BJ (cell line): ENCODE measurements at regions of chr7 and their contacts with region 1.

Region 1: GRCh38 chr7:17769918-17770317 is 170.4 kb downstream of the SNX13 start:
- DNase-seq: no peak
- H3K4me3 ChIP-seq: no peak overlapping the region
- H3K27me3 ChIP-seq: peaks cover 1% of the 10 kb centered on the region; the same call in 1 of the 2 replicates
- CTCF ChIP-seq: peak; percentile 83

Region 2: DNA sequence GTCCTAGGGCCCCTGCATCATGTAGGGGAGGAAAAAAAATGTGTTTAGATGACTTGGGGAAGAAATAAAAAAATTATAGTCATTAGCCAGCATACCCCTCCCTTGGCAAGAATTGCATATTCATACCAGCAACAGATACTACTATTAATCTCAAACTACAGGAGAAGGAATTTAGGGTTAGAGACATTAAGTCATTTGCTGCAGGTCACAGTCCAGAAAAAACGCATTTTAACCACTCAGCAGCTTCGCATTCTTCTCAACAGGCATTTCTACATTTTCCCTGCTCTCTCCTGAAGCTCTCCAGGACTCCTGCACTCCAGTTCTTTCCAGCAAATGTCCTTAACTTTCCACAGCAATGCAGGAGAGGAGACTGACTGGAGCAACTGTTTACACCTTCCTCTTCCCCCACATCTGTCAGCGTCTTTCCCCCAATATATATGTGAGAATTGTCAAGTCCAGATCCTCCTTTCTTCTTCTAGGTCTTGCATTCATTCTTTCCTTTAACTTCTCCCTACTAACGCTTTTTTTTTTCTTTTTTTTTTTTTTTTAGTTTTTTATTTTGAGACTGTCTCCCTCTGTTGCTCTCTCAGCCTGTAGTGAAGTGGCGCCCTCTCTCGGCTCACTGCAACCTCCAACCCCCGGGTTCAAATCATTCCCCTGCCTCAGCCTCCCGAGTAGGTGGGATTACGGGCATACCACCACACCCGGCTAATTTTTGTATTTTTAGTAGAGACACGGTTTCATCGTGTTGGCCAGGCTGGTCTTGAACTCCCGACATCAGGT is 222.1 kb after region 1 on chr7:
- CTCF ChIA-PET with region 1: interaction called, 12 read pairs
- POLR2A ChIA-PET with region 1: no interaction called
- DNase-seq: no peak
- H3K4me3 ChIP-seq: no peak overlapping the region
- H3K27me3 ChIP-seq: no peaks in the 10 kb centered on the region
- CTCF ChIP-seq: peak; percentile 37; the same call in 1 of the 2 replicates

Region 3: GRCh38 chr7:18320971-18321567 is 551.2 kb after region 1 on chr7:
- CTCF ChIA-PET with region 1: interaction called, 16 read pairs
- POLR2A ChIA-PET with region 1: no interaction called
- DNase-seq: no peak
- H3K4me3 ChIP-seq: no peak overlapping the region
- H3K27me3 ChIP-seq: no peaks in the 10 kb centered on the region
- CTCF ChIP-seq: peak; percentile 63